Caco-2 (cell line): ENCODE measurements at regions of chr1 and their contacts with region 1.

Region 1: GRCh38 chr1:17661546-17662157 is 93.5 kb upstream of the ACTL8 start:
- DNase-seq: peak; percentile 55 to 74
- H3K4me3 ChIP-seq: no peak overlapping the region
- H3K4me3 Mint-ChIP-seq: no peak overlapping the region
- H3K27ac Mint-ChIP-seq: no peak overlapping the region
- H3K4me1 ChIP-seq: no peaks in the 10 kb centered on the region
- H3K4me1 Mint-ChIP-seq: no peaks in the 10 kb centered on the region
- H3K27me3 ChIP-seq: no peaks in the 10 kb centered on the region
- H3K27me3 Mint-ChIP-seq: no peaks in the 10 kb centered on the region
- CTCF ChIP-seq: peak; percentile 67 to 72

Region 2: DNA sequence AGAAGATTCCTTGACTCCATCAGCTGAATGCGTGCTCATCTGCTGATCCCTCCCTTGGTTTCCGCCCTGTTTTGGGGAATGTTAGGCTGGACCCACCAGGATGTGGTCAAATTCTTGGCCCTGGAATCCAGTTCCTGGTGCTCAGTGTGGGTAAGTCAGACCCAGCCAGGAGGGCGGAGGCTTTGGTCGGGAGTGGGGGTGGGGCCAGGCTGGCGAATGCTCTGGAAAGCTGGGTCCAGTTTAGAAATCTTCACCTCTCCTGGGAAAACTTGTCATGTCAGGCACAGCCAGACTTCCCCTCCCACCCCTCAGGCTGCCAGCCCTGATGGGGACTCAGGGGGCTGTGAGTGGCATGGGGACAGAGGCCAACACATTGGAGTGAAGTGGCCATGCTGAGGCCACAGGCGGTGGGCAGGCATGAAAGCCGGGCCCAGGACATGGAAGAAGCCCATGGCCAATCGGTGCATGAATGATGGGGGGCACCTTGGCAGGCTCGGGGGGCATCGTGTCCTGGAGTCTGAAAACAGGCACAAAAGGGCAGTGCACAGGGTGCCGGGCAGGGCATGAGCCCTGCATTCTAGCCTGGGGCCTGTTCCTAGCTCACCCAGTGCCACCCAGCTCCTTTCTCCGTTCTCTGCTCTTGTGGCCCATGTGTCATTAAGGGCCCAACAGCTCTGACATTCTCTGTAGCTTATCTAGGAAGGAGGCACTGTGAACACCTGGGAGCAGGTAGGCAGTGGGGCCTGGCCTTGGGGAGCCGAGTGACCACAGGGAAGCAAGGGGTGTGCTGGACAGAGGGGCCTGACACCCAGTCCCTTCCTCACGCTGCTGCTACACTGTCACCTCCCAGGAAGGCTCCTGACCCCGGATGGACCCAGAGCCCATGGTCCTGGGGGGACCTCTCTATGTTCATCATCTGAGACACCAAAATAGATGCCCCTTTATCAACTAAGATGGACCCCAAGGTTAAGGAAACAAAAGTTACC is 471.3 kb before region 1 on chr1:
- CTCF ChIA-PET with region 1: no interaction called
- POLR2A ChIA-PET with region 1: no interaction called
- intact Hi-C with region 1: no loop called
- DNase-seq: no peak
- H3K4me3 ChIP-seq: no peak overlapping the region
- H3K4me3 Mint-ChIP-seq: no peak overlapping the region
- H3K27ac Mint-ChIP-seq: no peak overlapping the region
- H3K4me1 ChIP-seq: no peaks in the 10 kb centered on the region
- H3K4me1 Mint-ChIP-seq: no peaks in the 10 kb centered on the region
- H3K27me3 ChIP-seq: no peaks in the 10 kb centered on the region
- H3K27me3 Mint-ChIP-seq: no peaks in the 10 kb centered on the region
- CTCF ChIP-seq: no peak

Region 3: GRCh38 chr1:17717594-17718535 is 56.2 kb after region 1 on chr1:
- CTCF ChIA-PET with region 1: no interaction called
- POLR2A ChIA-PET with region 1: no interaction called
- intact Hi-C with region 1: no loop called
- DNase-seq: no peak
- H3K4me3 ChIP-seq: no peak overlapping the region
- H3K4me3 Mint-ChIP-seq: no peak overlapping the region
- H3K27ac Mint-ChIP-seq: no peak overlapping the region
- H3K4me1 ChIP-seq: no peaks in the 10 kb centered on the region
- H3K4me1 Mint-ChIP-seq: no peaks in the 10 kb centered on the region
- H3K27me3 ChIP-seq: no peaks in the 10 kb centered on the region
- H3K27me3 Mint-ChIP-seq: peaks cover 2% of the 10 kb centered on the region
- CTCF ChIP-seq: no peak

Region 4: GRCh38 chr1:17744666-17745478 is 83.2 kb after region 1 on chr1:
- CTCF ChIA-PET with region 1: interaction called, 10 read pairs
- POLR2A ChIA-PET with region 1: no interaction called
- intact Hi-C with region 1: no loop called
- DNase-seq: no peak
- H3K4me3 ChIP-seq: no peak overlapping the region
- H3K4me3 Mint-ChIP-seq: no peak overlapping the region
- H3K27ac Mint-ChIP-seq: no peak overlapping the region
- H3K4me1 ChIP-seq: no peaks in the 10 kb centered on the region
- H3K4me1 Mint-ChIP-seq: no peaks in the 10 kb centered on the region
- H3K27me3 ChIP-seq: no peaks in the 10 kb centered on the region
- H3K27me3 Mint-ChIP-seq: peaks cover 8% of the 10 kb centered on the region
- CTCF ChIP-seq: no peak

Region 5: GRCh38 chr1:17826165-17826488 is 164.5 kb after region 1 on chr1:
- CTCF ChIA-PET with region 1: no interaction called
- POLR2A ChIA-PET with region 1: no interaction called
- intact Hi-C with region 1: loop called (anchors 5 kb)
- DNase-seq: peak; percentile 46 to 51
- H3K4me3 ChIP-seq: no peak overlapping the region
- H3K4me3 Mint-ChIP-seq: no peak overlapping the region
- H3K27ac Mint-ChIP-seq: no peak overlapping the region
- H3K4me1 ChIP-seq: no peaks in the 10 kb centered on the region
- H3K4me1 Mint-ChIP-seq: no peaks in the 10 kb centered on the region
- H3K27me3 ChIP-seq: no peaks in the 10 kb centered on the region
- H3K27me3 Mint-ChIP-seq: no peaks in the 10 kb centered on the region
- CTCF ChIP-seq: peak; percentile 33 to 47